ENCODE measurements at regions of chr7 and their contacts with region 1.

Region 1: DNA sequence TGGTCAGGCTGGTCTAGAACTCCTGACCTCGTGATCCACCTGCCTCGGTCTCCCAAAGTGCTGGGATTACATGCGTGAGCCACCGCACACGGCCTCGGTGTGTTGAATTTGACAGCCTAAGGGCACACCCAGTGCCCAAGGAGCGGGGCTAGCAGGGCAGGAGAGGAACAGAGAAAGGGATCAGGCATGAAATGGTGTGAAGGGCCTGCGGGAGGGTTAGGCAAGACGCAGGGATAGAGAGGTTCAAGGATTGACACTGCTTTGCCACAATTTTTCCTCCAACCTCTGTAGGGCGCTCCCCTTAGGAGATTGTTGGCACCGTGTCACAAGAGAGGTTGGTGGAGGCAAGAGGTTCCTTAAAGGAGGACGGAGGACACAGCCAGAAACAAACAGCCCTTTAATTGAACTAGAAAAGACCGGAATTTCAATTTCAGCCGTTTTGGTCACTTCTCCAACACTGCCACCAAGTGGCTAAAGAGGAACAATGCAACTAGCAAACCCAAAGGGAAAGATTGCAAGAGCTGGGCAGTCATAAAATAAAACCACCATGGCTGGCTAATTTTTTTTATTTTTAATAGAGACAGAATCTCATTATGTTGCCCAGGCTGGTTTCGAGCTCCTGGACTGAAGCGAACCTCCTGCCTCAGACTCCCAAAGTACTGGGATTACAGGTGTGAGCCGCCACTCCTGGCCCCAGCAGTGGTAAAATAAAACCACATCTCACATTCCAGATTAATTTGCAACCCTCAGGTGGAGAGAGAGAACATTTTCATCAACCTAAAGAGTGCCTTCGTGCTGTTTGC is 6.9 kb upstream of the CREB3L2 start:
- DNase-seq: peak in 7 of 9 donors; percentile 20 to 63 (median 52)
- ATAC-seq: peak; percentile 80
- H3K4me3 ChIP-seq: no peak overlapping the region
- H3K4me3 Mint-ChIP-seq: no peak overlapping the region
- H3K27ac ChIP-seq: no peak overlapping the region
- H3K27ac Mint-ChIP-seq: peak overlapping the region in 1 of 9 donors; percentile 20
- H3K4me1 ChIP-seq: peaks cover 0 to 3% of the 10 kb centered on the region in 2 donors
- H3K4me1 Mint-ChIP-seq: peaks cover 3 to 13% (median 10%) of the 10 kb centered on the region in 7 donors
- H3K27me3 ChIP-seq: no peaks in the 10 kb centered on the region
- H3K27me3 Mint-ChIP-seq: peaks cover 0 to 6% (median 0%) of the 10 kb centered on the region in 5 donors

Region 2: DNA sequence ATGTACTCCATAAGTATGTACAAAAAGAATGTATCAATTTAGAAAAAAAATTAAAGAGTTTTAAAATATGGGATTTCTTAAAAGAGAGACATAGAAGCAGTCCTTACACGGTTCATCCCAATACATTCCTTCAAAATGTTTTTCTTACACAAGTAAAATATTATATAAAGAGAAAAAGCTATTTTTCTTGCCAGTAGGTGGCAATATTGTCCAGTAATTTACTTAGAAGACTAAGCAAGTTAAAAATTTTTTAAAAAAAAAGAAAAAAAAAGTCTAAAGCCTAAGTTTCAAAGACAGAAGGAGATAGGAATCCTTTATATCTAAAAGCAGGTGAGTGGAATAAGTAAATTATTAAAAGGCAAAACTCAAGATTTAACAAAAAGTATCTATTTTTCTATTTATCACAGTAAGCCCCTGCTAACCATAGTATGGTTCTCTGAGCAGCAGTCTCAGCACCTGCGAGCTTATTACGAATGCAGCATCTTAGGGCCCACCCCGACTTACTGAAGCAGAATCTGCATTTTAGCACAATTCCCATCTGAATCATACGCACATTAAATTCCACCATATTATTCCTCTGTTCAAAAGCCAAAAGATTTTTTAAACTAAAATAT is 402.6 kb before region 1 on chr7:
- CTCF ChIA-PET with region 1: no interaction called
- POLR2A ChIA-PET with region 1: no interaction called
- intact Hi-C with region 1: loop called in 1 of 2 experiments (anchors 2 kb)
- DNase-seq: peak in 4 of 9 donors; percentile 3 to 14 (median 6)
- ATAC-seq: no peak
- H3K4me3 ChIP-seq: no peak overlapping the region
- H3K4me3 Mint-ChIP-seq: no peak overlapping the region
- H3K27ac ChIP-seq: no peak overlapping the region
- H3K27ac Mint-ChIP-seq: no peak overlapping the region
- H3K4me1 ChIP-seq: no peaks in the 10 kb centered on the region
- H3K4me1 Mint-ChIP-seq: no peaks in the 10 kb centered on the region
- H3K27me3 ChIP-seq: peaks cover 0 to 3% of the 10 kb centered on the region in 2 donors
- H3K27me3 Mint-ChIP-seq: peaks cover 3 to 27% (median 25%) of the 10 kb centered on the region in 5 donors

Region 3: DNA sequence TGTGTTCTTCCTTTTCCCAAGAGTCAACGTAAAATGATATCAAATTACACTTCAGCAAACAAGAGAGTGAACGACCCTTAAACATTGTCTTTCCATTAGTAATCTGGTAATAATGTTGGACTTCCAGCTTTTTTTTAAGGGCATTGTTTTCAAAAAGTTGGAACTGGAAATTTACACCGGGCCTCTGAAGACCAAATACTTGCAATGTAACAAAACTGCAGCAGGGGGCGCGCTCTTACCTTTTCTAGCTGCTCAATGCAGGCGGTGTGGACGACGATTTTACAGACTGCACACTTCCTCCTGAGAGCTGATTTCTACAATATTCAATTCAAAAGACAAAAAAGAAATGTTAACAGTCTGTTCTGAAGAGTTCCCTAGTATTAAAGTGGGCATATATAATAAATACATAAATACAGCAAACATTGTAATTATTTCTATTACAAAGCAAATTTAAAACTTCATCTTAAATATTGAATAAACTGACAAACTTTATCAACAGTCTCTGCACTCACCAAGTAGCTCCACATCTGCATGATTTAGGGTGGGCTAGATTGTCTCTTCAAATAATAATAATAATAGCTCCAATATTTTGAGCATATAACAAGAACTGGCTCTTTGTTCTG is 352.4 kb before region 1 on chr7:
- CTCF ChIA-PET with region 1: interaction called, 6 read pairs
- POLR2A ChIA-PET with region 1: no interaction called
- intact Hi-C with region 1: loop called (anchors 1 kb)
- DNase-seq: peak in 8 of 9 donors; percentile 7 to 64 (median 33)
- ATAC-seq: peak; percentile 46
- H3K4me3 ChIP-seq: no peak overlapping the region
- H3K4me3 Mint-ChIP-seq: no peak overlapping the region
- H3K27ac ChIP-seq: no peak overlapping the region
- H3K27ac Mint-ChIP-seq: no peak overlapping the region
- H3K4me1 ChIP-seq: no peaks in the 10 kb centered on the region
- H3K4me1 Mint-ChIP-seq: peaks cover 0 to 4% (median 0%) of the 10 kb centered on the region in 7 donors
- H3K27me3 ChIP-seq: no peaks in the 10 kb centered on the region
- H3K27me3 Mint-ChIP-seq: peaks cover 0 to 11% (median 5%) of the 10 kb centered on the region in 5 donors

Region 4: GRCh38 chr7:137687556-137688280 is 321.0 kb before region 1 on chr7:
- CTCF ChIA-PET with region 1: no interaction called
- POLR2A ChIA-PET with region 1: no interaction called
- intact Hi-C with region 1: no loop called
- DNase-seq: no peak
- ATAC-seq: no peak
- H3K4me3 ChIP-seq: no peak overlapping the region
- H3K4me3 Mint-ChIP-seq: no peak overlapping the region
- H3K27ac ChIP-seq: no peak overlapping the region
- H3K27ac Mint-ChIP-seq: no peak overlapping the region
- H3K4me1 ChIP-seq: no peaks in the 10 kb centered on the region
- H3K4me1 Mint-ChIP-seq: no peaks in the 10 kb centered on the region
- H3K27me3 ChIP-seq: no peaks in the 10 kb centered on the region
- H3K27me3 Mint-ChIP-seq: peaks cover 0 to 13% (median 9%) of the 10 kb centered on the region in 5 donors